HEK293 (cell line): ENCODE measurements at regions of chr15 and their contacts with region 1.

Region 1: GRCh38 chr15:72532991-72533601 is 59.0 kb downstream of the ARIH1 start:
- H3K4me3 ChIP-seq: no peak overlapping the region
- H3K27ac ChIP-seq: no peak overlapping the region
- H3K4me1 ChIP-seq: peaks cover 14% of the 10 kb centered on the region
- CTCF ChIP-seq: 0 out of 2 replicates have a peak, but pooled peaks have one; percentile 38

Region 2: GRCh38 chr15:72545156-72545555 is 12.1 kb after region 1 on chr15:
- CTCF ChIA-PET with region 1: interaction called, 14 read pairs
- POLR2A ChIA-PET with region 1: no interaction called
- H3K4me3 ChIP-seq: no peak overlapping the region
- H3K27ac ChIP-seq: no peak overlapping the region
- H3K4me1 ChIP-seq: peaks cover 5% of the 10 kb centered on the region; the same call in 1 of the 2 replicates
- CTCF ChIP-seq: no peak